Mammary epithelial cell (primary cell): ENCODE measurements at regions of chr11 and their contacts with region 1.

Region 1: GRCh38 chr11:57515332-57516060 is at the start of gene SLC43A1:
- DNase-seq: no peak
- H3K4me3 ChIP-seq: peak within 1 kb of the TSS; percentile 41 to 57 (median 55)
- H3K27ac ChIP-seq: no peak within 1 kb of the TSS
- H3K4me1 ChIP-seq: peaks cover 13% of the 10 kb centered on the region
- H3K27me3 ChIP-seq: peaks cover 16% of the 10 kb centered on the region
- CTCF ChIP-seq: no peak
- total RNA-seq, gene SLC43A1: 1.4 to 2.2 TPM

Region 2: DNA sequence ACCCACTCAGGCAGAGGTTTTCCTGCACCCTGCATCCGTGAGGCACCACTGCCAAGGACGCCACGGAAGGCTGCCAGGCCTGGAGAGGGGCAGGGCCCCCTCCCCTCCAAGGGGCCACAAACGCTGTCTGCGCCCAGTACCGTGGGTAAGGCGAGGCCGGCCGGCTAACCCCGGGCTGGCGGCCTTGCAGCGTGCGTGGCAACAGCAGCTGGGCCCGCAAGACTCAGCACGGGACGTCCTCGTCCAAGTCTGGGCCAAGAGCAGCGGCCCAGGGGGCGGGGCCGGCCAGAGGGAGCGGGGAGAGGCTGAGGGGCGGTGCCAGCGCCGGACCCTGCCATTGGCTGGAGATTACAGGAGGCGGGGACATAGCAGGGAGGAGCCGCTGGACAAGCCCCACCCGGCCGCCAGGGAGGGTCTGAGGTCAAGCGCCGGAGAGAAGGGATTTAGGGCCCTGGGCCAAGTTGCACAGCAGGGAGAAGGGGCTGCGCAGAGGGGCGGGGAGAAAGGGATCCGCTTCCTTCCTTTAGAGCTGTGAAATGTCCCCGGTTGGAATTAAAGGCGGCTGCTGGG is 16.0 kb before region 1 on chr11:
- CTCF ChIA-PET with region 1: no interaction called
- dilution Hi-C with region 1: no loop called
- in situ Hi-C with region 1: no loop called
- intact Hi-C with region 1: loop called (anchors 2 kb)
- DNase-seq: peak; percentile 68
- H3K4me3 ChIP-seq: peak overlapping the region; percentile 21 to 47 (median 39)
- H3K27ac ChIP-seq: no peak overlapping the region
- H3K4me1 ChIP-seq: peaks cover 3% of the 10 kb centered on the region
- H3K27me3 ChIP-seq: no peaks in the 10 kb centered on the region
- CTCF ChIP-seq: no peak

Region 3: GRCh38 chr11:57712256-57713150 is 197.0 kb after region 1 on chr11 and contains the start of gene TMX2:
- CTCF ChIA-PET with region 1: no interaction called
- dilution Hi-C with region 1: no loop called
- in situ Hi-C with region 1: no loop called
- intact Hi-C with region 1: no loop called
- DNase-seq: peak; percentile 99
- H3K4me3 ChIP-seq: peak within 1 kb of the TSS; percentile 61 to 97 (median 86)
- H3K27ac ChIP-seq: peak within 1 kb of the TSS; percentile 74
- H3K4me1 ChIP-seq: peaks cover 14% of the 10 kb centered on the region
- H3K27me3 ChIP-seq: no peaks in the 10 kb centered on the region
- CTCF ChIP-seq: no peak
- total RNA-seq, gene TMX2: 54.0 to 95.8 TPM